Activated CD4-positive, alpha-beta T cell treated with anti-CD3 and anti-CD28 coated beads for 36 hours (primary cell): ENCODE measurements at regions of chrX and their contacts with region 1.

Region 1: GRCh38 chrX:1462596-1463251 is 10.0 kb upstream of the ASMTL start:
- DNase-seq: peak; percentile 87
- ATAC-seq: peak; percentile 90
- H3K4me3 Mint-ChIP-seq: peak overlapping the region; percentile 53
- H3K27ac Mint-ChIP-seq: peak overlapping the region; percentile 97
- H3K4me1 Mint-ChIP-seq: peaks cover 54% of the 10 kb centered on the region
- H3K27me3 Mint-ChIP-seq: no peaks in the 10 kb centered on the region

Region 2: DNA sequence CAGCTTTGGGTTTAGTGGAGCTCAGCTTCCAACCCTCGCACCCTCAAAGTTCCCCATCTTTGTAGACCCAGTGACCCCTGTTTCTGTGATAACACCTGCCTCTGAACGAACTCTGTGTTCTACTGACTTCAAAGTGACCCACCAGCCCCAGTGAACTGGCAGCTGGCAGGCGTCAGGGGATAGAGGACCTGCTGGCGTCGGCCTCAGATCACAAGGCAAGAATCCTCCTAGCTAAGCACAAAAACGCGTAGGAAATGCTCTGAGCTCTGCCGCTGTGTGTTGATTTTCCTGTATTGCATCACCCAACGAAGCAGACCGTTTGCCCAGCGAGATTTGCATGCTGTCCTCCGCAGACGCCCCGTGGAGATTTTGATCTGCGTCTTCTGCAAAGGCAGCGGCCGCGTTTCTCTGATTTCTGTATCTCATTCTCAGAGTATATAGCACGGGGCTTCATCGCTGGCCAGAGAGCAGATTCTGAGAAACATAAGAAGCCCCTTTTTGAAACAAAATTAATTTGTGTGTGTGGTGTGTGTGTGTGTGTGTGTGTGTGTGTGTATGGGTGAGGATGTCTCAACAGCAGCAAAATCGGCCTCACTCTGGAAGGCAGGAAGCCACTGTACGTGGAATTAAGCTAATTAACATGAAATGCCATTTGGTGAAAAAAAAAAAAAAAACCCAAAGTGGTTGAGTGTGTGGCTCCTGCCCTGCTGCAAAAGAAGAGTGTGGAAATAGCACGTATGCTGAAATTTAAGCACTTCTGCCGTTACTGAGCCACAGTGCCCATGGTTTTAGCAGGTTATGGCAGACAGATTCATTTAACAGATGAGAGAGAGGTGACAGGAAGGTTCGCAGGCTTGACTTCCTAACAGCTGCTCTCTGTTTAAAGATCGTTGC is 19.2 kb after region 1 on chrX:
- CTCF ChIA-PET with region 1: no interaction called
- POLR2A ChIA-PET with region 1: no interaction called
- intact Hi-C with region 1: loop called (anchors 1 kb)
- DNase-seq: peak; percentile 87
- ATAC-seq: peak; percentile 73
- H3K4me3 Mint-ChIP-seq: peak overlapping the region; percentile 82
- H3K27ac Mint-ChIP-seq: peak overlapping the region; percentile 99
- H3K4me1 Mint-ChIP-seq: peaks cover 65% of the 10 kb centered on the region
- H3K27me3 Mint-ChIP-seq: no peaks in the 10 kb centered on the region

Region 3: GRCh38 chrX:1528186-1528883 is 65.6 kb after region 1 on chrX:
- CTCF ChIA-PET with region 1: no interaction called
- POLR2A ChIA-PET with region 1: no interaction called
- intact Hi-C with region 1: loop called in 1 of 2 experiments (anchors 2 kb)
- DNase-seq: peak; percentile 40
- ATAC-seq: peak; percentile 72
- H3K4me3 Mint-ChIP-seq: no peak overlapping the region
- H3K27ac Mint-ChIP-seq: no peak overlapping the region
- H3K4me1 Mint-ChIP-seq: peaks cover 8% of the 10 kb centered on the region
- H3K27me3 Mint-ChIP-seq: no peaks in the 10 kb centered on the region

Region 4: GRCh38 chrX:1580735-1581531 is 118.2 kb after region 1 on chrX:
- CTCF ChIA-PET with region 1: no interaction called
- POLR2A ChIA-PET with region 1: no interaction called
- intact Hi-C with region 1: loop called (anchors 2 kb)
- DNase-seq: peak; percentile 90
- ATAC-seq: peak; percentile 78
- H3K4me3 Mint-ChIP-seq: no peak overlapping the region
- H3K27ac Mint-ChIP-seq: no peak overlapping the region
- H3K4me1 Mint-ChIP-seq: peaks cover 19% of the 10 kb centered on the region
- H3K27me3 Mint-ChIP-seq: no peaks in the 10 kb centered on the region

Region 5: GRCh38 chrX:1591102-1591900 is 128.6 kb after region 1 on chrX and contains the start of gene AKAP17A:
- CTCF ChIA-PET with region 1: no interaction called
- POLR2A ChIA-PET with region 1: no interaction called
- intact Hi-C with region 1: loop called in 1 of 2 experiments (anchors 2 kb)
- DNase-seq: peak; percentile 99
- ATAC-seq: peak; percentile 91
- H3K4me3 Mint-ChIP-seq: peak within 1 kb of the TSS; percentile 91
- H3K27ac Mint-ChIP-seq: peak within 1 kb of the TSS; percentile 89
- H3K4me1 Mint-ChIP-seq: peaks cover 27% of the 10 kb centered on the region
- H3K27me3 Mint-ChIP-seq: no peaks in the 10 kb centered on the region
- total RNA-seq, gene AKAP17A: 49.7 to 51.2 TPM

Region 6: DNA sequence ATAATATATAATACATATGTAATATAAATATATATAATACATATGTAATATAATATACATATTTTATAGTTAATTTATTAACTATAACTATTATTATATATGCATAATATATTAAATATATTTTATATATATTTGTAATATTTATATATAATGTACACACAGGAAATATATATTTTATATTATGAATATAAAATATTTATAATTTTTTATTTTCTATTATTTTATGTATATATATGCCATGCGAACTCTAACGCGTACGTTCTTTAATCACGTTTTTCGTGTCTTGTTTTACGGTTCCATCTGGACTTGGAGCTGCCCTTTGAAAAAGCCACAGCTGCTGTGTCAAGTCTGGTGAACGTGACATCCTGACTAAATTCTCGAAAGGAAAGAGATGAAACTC is 484.2 kb after region 1 on chrX:
- CTCF ChIA-PET with region 1: no interaction called
- POLR2A ChIA-PET with region 1: no interaction called
- intact Hi-C with region 1: no loop called
- DNase-seq: no peak
- ATAC-seq: no peak
- H3K4me3 Mint-ChIP-seq: no peak overlapping the region
- H3K27ac Mint-ChIP-seq: no peak overlapping the region
- H3K4me1 Mint-ChIP-seq: no peaks in the 10 kb centered on the region
- H3K27me3 Mint-ChIP-seq: no peaks in the 10 kb centered on the region

Region 7: GRCh38 chrX:2696698-2697215 is 1234.0 kb after region 1 on chrX:
- CTCF ChIA-PET with region 1: no interaction called
- POLR2A ChIA-PET with region 1: no interaction called
- intact Hi-C with region 1: loop called (anchors 2 to 10 kb)
- DNase-seq: peak; percentile 72
- ATAC-seq: peak; percentile 81
- H3K4me3 Mint-ChIP-seq: peak overlapping the region; percentile 95
- H3K27ac Mint-ChIP-seq: peak overlapping the region; percentile 92
- H3K4me1 Mint-ChIP-seq: peaks cover 86% of the 10 kb centered on the region
- H3K27me3 Mint-ChIP-seq: no peaks in the 10 kb centered on the region